PC-9 (cell line): ENCODE measurements at regions of chr5 and their contacts with region 1.

Region 1: DNA sequence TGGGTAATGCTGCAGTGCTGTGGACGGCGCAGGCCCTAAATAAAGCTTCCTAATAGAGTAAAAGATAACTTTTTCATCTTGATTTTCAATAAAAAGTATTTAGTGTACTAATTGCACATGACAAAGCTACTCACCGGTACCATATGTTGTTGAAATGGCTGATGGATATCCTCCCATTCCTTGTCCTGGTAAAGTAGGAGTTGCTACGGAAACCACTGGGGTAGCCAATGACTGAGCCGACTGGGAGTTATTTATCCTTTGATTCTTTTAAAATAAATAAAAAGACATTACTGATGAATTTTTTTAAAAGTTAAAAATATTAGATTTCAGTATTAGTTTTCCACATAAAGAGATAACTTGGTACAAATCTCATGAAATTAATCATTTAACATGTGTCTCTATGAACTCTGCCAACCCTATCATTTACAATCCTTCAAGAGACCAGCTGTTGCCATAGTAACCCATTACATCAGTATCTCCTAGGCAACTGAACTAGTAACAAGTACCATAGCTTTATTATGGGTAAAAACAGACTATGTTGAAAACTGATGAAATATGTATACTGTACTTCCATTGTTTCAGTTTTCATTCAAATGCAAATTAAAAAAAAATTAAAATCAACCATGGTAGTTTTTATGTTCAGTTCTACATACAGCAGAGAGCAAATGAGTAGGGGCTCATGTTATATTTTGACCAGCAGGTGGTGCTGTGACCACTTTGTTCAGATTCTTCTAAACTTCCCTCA is 153.7 kb downstream of the MEF2C start:
- DNase-seq: peak in 1 of 2 experiments; percentile 54
- H3K4me3 ChIP-seq: no peak overlapping the region
- H3K27ac ChIP-seq: no peak overlapping the region
- H3K4me1 ChIP-seq: no peaks in the 10 kb centered on the region
- H3K27me3 ChIP-seq: no peaks in the 10 kb centered on the region
- CTCF ChIP-seq: peak; percentile 86

Region 2: DNA sequence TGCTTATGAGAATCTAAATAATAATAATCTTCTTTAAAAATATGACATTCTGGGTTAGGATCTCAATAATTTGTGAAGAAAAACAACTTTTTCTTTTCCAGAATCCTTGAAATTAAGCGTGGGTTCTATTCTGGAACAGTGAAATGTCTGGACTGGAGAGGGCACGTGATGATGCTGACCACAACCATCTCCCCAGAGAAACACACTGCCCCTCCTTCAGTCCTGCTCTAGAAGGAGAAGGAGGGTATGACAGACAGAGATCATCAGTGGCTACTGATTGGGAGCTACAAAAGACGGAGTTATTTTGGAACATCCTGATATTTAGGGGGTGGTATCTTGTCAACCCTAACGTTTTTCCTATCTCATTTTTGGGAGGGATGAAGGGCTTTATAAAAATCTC is 113.5 kb after region 1 on chr5:
- CTCF ChIA-PET with region 1: interaction called, 13 read pairs
- POLR2A ChIA-PET with region 1: no interaction called
- intact Hi-C with region 1: no loop called
- DNase-seq: no peak
- H3K4me3 ChIP-seq: no peak overlapping the region
- H3K27ac ChIP-seq: no peak overlapping the region
- H3K4me1 ChIP-seq: no peaks in the 10 kb centered on the region
- H3K27me3 ChIP-seq: no peaks in the 10 kb centered on the region
- CTCF ChIP-seq: no peak

Region 3: DNA sequence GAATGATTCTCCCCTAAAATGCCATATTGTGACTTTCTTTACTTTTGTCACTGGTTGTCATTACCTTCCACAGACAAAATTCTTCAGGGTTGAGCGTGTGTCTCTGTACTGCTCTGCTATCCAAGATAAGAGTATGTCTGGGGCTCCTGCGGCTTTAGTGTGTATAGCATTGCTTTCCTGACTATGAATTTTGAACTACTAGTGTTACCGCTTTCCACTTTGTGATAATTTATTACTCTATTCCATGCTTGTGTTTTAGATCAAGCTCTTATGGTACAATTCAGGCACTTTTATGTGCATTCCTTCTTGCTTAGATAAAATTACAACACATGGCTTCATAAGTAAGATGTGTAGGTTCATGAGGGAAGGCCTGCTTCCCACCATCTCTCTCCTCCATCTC is 205.2 kb after region 1 on chr5:
- CTCF ChIA-PET with region 1: no interaction called
- POLR2A ChIA-PET with region 1: interaction called, 10 read pairs
- intact Hi-C with region 1: no loop called
- DNase-seq: no peak
- H3K4me3 ChIP-seq: no peak overlapping the region
- H3K27ac ChIP-seq: no peak overlapping the region
- H3K4me1 ChIP-seq: no peaks in the 10 kb centered on the region
- H3K27me3 ChIP-seq: no peaks in the 10 kb centered on the region
- CTCF ChIP-seq: no peak

Region 4: DNA sequence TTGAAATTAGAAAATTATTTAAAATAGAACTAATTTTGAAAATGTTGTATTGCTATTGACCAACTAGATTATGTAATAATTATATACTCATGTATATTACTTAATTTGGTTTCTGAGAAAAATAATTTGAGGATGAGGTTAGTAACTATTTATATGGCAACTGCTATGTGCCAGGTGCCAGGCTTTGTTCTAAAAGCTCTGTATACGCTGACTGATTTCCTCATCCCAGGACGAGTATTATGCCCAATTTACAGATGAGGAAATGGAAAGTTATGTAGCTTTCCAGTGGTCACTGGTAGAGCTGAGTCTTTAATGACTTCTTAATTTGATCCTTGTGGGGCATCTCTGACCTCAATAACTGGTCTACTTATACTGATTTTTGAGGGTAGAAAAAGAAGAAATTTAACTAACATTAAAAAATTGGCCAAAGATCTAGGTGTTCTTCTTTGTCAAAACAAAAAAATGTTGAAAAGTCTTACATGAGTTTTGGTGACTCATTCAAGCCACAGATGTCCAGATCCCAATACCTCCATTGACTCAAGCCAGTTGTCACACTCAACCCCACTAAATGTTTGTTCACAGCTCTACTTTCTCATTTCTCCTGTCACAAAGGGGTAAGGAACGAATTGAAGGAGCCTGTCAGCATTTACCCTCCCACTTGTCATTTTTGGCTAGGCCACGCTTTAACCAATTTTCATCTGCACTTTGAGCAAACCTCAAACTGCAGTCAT is 381.8 kb after region 1 on chr5:
- CTCF ChIA-PET with region 1: no interaction called
- POLR2A ChIA-PET with region 1: no interaction called
- intact Hi-C with region 1: no loop called
- DNase-seq: no peak
- H3K4me3 ChIP-seq: no peak overlapping the region
- H3K27ac ChIP-seq: no peak overlapping the region
- H3K4me1 ChIP-seq: no peaks in the 10 kb centered on the region
- H3K27me3 ChIP-seq: no peaks in the 10 kb centered on the region
- CTCF ChIP-seq: no peak

Region 5: GRCh38 chr5:90184764-90185163 is 1455.5 kb after region 1 on chr5:
- CTCF ChIA-PET with region 1: no interaction called
- POLR2A ChIA-PET with region 1: no interaction called
- intact Hi-C with region 1: loop called (anchors 2 kb)
- DNase-seq: no peak
- H3K4me3 ChIP-seq: no peak overlapping the region
- H3K27ac ChIP-seq: no peak overlapping the region
- H3K4me1 ChIP-seq: 0 out of 2 replicates have a peak, but pooled peaks cover 8% of the 10 kb centered on the region
- H3K27me3 ChIP-seq: no peaks in the 10 kb centered on the region
- CTCF ChIP-seq: no peak

Region 6: DNA sequence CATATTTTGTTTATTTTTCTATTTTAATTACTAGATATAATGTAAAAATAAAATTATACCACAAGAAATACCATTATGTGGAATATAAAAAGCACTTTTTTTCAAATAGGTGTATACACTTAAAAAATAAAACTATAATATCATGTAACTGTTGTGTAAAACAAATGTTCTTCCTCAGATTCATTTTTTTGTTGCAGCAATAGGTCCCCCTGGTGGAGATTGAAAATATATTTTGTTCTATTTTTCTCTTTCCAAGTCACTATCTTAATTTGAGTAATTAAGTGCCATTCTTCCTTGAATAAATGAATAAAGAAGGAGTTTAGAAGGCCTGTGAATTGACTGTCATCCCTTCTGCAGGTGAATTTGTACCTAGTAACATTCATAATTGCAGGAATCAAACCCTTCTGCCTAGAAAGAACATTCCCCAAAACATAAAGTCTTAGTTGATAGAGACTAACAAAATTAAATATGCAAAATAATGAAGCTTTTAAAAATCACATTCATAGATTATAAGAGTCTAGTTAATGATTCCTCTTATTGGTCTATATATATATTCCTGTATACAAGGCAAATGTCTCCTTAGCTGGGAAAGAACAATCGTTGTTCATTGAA is 1656.9 kb after region 1 on chr5:
- CTCF ChIA-PET with region 1: interaction called, 3 read pairs
- POLR2A ChIA-PET with region 1: no interaction called
- intact Hi-C with region 1: loop called (anchors 2 kb)
- DNase-seq: peak in 1 of 2 experiments; percentile 37
- H3K4me3 ChIP-seq: no peak overlapping the region
- H3K27ac ChIP-seq: no peak overlapping the region
- H3K4me1 ChIP-seq: peaks cover 5% of the 10 kb centered on the region; the same call in 1 of the 2 replicates
- H3K27me3 ChIP-seq: no peaks in the 10 kb centered on the region
- CTCF ChIP-seq: peak; percentile 72

Region 7: GRCh38 chr5:90529194-90529938 is 1800.1 kb after region 1 on chr5 and contains the start of gene LYSMD3:
- CTCF ChIA-PET with region 1: no interaction called
- POLR2A ChIA-PET with region 1: no interaction called
- intact Hi-C with region 1: loop called (anchors 2 kb)
- DNase-seq: peak; percentile 91 to 95
- H3K4me3 ChIP-seq: peak within 1 kb of the TSS; percentile 82
- H3K27ac ChIP-seq: peak within 1 kb of the TSS; percentile 54
- H3K4me1 ChIP-seq: peaks cover 15% of the 10 kb centered on the region
- H3K27me3 ChIP-seq: peaks cover 4% of the 10 kb centered on the region; the same call in 1 of the 2 replicates
- CTCF ChIP-seq: no peak
- total RNA-seq, gene LYSMD3: 4.6 and 10.6 TPM in 2 replicates